ENCODE measurements at regions of chr4 and their contacts with region 1.

Region 1: DNA sequence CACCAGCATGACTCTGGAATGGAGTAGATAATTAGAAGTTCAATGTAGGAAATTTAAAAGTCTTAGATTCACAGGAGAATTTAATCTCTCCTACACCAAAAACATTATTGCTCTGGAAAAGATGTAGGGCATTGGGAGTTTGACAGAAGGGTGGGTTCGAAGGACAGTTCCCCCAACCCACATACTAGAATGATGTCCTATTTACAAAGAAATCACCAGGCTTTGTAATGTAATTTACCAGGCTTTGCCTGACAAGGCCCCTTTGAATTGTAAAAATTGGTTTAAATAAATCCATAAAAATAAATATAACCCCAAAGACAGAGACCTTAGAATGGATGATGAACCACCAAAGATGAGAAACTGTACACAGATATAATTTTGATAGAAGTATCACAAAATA is 399.2 kb upstream of the GRID2 start:
- DNase-seq: no peak
- ATAC-seq: no peak
- H3K4me3 ChIP-seq: no peak overlapping the region
- H3K27ac ChIP-seq: no peak overlapping the region
- H3K4me1 ChIP-seq: no peaks in the 10 kb centered on the region
- H3K27me3 ChIP-seq: no peaks in the 10 kb centered on the region
- CTCF ChIP-seq: no peak

Region 2: GRCh38 chr4:92461732-92462131 is 557.2 kb after region 1 on chr4:
- CTCF ChIA-PET with region 1: no interaction called
- POLR2A ChIA-PET with region 1: no interaction called
- in situ Hi-C with region 1: no loop called
- intact Hi-C with region 1: loop called (anchors 5 kb)
- DNase-seq: no peak
- ATAC-seq: no peak
- H3K4me3 ChIP-seq: no peak overlapping the region
- H3K27ac ChIP-seq: no peak overlapping the region
- H3K4me1 ChIP-seq: no peaks in the 10 kb centered on the region
- H3K27me3 ChIP-seq: no peaks in the 10 kb centered on the region
- CTCF ChIP-seq: no peak

Measured in Panc1 (cell line).